Naive thymus-derived CD4-positive, alpha-beta T cell (primary cell): ENCODE measurements at regions of chr1 and their contacts with region 1.

Region 1: DNA sequence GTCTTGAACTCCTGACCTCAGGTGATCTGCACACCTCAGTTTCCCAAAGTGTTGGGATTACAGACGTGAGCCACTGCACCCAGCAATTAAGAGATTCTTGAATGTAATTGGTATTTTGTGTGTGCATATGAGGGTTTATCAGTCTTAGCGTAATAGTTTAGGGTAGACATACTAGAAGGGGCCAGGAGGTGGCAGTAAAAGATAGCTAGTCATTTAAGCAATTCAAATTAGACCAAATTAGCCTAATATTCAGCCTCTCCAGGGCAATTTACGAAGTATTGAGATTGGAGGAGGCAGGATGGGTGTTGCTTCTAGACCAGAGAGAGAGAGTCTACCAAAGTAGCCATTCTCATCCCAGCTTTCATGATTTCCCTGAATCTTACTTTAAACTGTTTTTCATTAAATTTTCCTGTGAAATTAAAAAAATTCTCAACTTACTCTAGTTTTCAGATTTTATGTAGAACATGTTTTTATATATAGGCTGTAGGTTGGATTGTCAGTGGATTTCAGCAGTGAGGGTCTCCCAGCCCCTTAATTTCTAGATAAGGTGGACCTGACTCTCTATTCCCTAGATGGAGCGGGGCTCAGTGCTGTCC is 119.7 kb downstream of the HHAT start:
- DNase-seq: peak in 3 of 9 donors; percentile 6 to 16 (median 9)
- ATAC-seq: no peak
- H3K4me3 ChIP-seq: no peak overlapping the region
- H3K4me3 Mint-ChIP-seq: no peak overlapping the region
- H3K27ac ChIP-seq: no peak overlapping the region
- H3K27ac Mint-ChIP-seq: no peak overlapping the region
- H3K4me1 ChIP-seq: peaks cover 6 to 7% of the 10 kb centered on the region in 2 donors
- H3K4me1 Mint-ChIP-seq: peaks cover 6 to 15% (median 14%) of the 10 kb centered on the region in 7 donors
- H3K27me3 ChIP-seq: no peaks in the 10 kb centered on the region
- H3K27me3 Mint-ChIP-seq: peaks cover 0 to 13% (median 0%) of the 10 kb centered on the region in 5 donors

Region 2: GRCh38 chr1:210407207-210407886 is 41.0 kb before region 1 on chr1:
- CTCF ChIA-PET with region 1: interaction called, 3 read pairs
- POLR2A ChIA-PET with region 1: no interaction called
- intact Hi-C with region 1: loop called (anchors 1 to 2 kb)
- DNase-seq: peak; percentile 39 to 76 (median 64)
- ATAC-seq: peak; percentile 79
- H3K4me3 ChIP-seq: no peak overlapping the region
- H3K4me3 Mint-ChIP-seq: no peak overlapping the region
- H3K27ac ChIP-seq: no peak overlapping the region
- H3K27ac Mint-ChIP-seq: no peak overlapping the region
- H3K4me1 ChIP-seq: no peaks in the 10 kb centered on the region
- H3K4me1 Mint-ChIP-seq: peaks cover 0 to 2% (median 0%) of the 10 kb centered on the region in 7 donors
- H3K27me3 ChIP-seq: no peaks in the 10 kb centered on the region
- H3K27me3 Mint-ChIP-seq: peaks cover 0 to 14% (median 0%) of the 10 kb centered on the region in 5 donors

Region 3: GRCh38 chr1:210951279-210951678 is 502.9 kb after region 1 on chr1:
- CTCF ChIA-PET with region 1: no interaction called
- POLR2A ChIA-PET with region 1: no interaction called
- intact Hi-C with region 1: loop called in 1 of 2 experiments (anchors 2 kb)
- DNase-seq: no peak
- ATAC-seq: no peak
- H3K4me3 ChIP-seq: no peak overlapping the region
- H3K4me3 Mint-ChIP-seq: no peak overlapping the region
- H3K27ac ChIP-seq: no peak overlapping the region
- H3K27ac Mint-ChIP-seq: no peak overlapping the region
- H3K4me1 ChIP-seq: no peaks in the 10 kb centered on the region
- H3K4me1 Mint-ChIP-seq: no peaks in the 10 kb centered on the region
- H3K27me3 ChIP-seq: no peaks in the 10 kb centered on the region
- H3K27me3 Mint-ChIP-seq: peaks cover 0 to 11% (median 6%) of the 10 kb centered on the region in 5 donors

Region 4: GRCh38 chr1:211229365-211229759 is 781.0 kb after region 1 on chr1:
- CTCF ChIA-PET with region 1: no interaction called
- POLR2A ChIA-PET with region 1: no interaction called
- intact Hi-C with region 1: loop called in 1 of 2 experiments (anchors 2 kb)
- DNase-seq: no peak
- ATAC-seq: peak; percentile 54
- H3K4me3 ChIP-seq: no peak overlapping the region
- H3K4me3 Mint-ChIP-seq: peak overlapping the region; percentile 43 to 82 (median 74)
- H3K27ac ChIP-seq: peak overlapping the region; percentile 38
- H3K27ac Mint-ChIP-seq: peak overlapping the region; percentile 67 to 90 (median 82)
- H3K4me1 ChIP-seq: peaks cover 13 to 17% of the 10 kb centered on the region in 2 donors
- H3K4me1 Mint-ChIP-seq: peaks cover 15 to 41% (median 30%) of the 10 kb centered on the region in 7 donors
- H3K27me3 ChIP-seq: no peaks in the 10 kb centered on the region
- H3K27me3 Mint-ChIP-seq: peaks cover 0 to 8% (median 0%) of the 10 kb centered on the region in 5 donors

Region 5: DNA sequence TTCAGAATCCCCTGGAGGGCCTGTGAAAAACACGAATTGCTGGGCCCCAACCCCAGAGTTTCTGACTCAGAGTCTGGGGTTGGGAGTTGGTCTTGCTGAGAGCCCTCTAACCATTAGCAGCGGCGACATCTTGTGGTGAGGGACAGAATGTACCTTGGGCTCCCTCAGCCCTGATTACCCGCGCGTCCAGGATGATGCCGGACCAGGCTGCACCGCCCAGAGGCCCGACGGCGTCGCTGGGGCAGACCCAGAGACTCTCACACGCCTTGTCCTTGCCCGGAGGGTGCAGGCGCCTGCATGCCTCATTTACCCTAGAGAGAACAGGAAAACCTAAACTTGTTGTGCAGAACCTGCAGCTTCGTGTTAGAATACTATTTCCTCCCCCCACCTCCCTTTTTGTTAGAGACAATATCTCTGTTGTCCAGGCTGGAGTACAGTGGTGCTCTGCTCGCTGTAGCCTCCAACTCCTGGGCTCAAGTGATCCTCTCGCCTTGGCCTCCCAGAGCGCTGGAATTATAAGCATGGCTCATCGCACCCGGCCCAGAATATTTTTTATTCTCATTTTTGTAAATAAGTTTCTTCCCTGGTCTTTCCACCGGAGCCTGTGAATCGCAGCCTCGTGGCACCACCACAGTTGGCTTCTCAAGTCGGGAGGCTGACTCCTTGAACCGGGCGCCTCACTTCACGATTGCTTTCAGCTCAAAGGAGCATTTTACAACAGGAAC is 1065.8 kb after region 1 on chr1:
- CTCF ChIA-PET with region 1: no interaction called
- POLR2A ChIA-PET with region 1: no interaction called
- intact Hi-C with region 1: loop called in 1 of 2 experiments (anchors 1 kb)
- DNase-seq: peak; percentile 16 to 71 (median 46)
- ATAC-seq: peak; percentile 80
- H3K4me3 ChIP-seq: no peak overlapping the region
- H3K4me3 Mint-ChIP-seq: peak overlapping the region; percentile 61 to 84 (median 73)
- H3K27ac ChIP-seq: no peak overlapping the region
- H3K27ac Mint-ChIP-seq: peak overlapping the region in 2 of 9 donors; percentile 46 to 63
- H3K4me1 ChIP-seq: peaks cover 10 to 11% of the 10 kb centered on the region in 2 donors
- H3K4me1 Mint-ChIP-seq: peaks cover 5 to 35% (median 20%) of the 10 kb centered on the region in 7 donors
- H3K27me3 ChIP-seq: no peaks in the 10 kb centered on the region
- H3K27me3 Mint-ChIP-seq: peaks cover 0 to 12% (median 5%) of the 10 kb centered on the region in 5 donors